PC-3 (cell line): ENCODE measurements at regions of chr12 and their contacts with region 1.

Region 1: GRCh38 chr12:47837190-47838171 is 17.8 kb upstream of the HDAC7 start:
- DNase-seq: peak; percentile 89
- ATAC-seq: peak; percentile 47
- H3K4me3 ChIP-seq: no peak overlapping the region
- H3K27ac ChIP-seq: no peak overlapping the region
- H3K4me1 ChIP-seq: peaks cover 25% of the 10 kb centered on the region
- H3K27me3 ChIP-seq: no peaks in the 10 kb centered on the region
- CTCF ChIP-seq: peak; percentile 93

Region 2: DNA sequence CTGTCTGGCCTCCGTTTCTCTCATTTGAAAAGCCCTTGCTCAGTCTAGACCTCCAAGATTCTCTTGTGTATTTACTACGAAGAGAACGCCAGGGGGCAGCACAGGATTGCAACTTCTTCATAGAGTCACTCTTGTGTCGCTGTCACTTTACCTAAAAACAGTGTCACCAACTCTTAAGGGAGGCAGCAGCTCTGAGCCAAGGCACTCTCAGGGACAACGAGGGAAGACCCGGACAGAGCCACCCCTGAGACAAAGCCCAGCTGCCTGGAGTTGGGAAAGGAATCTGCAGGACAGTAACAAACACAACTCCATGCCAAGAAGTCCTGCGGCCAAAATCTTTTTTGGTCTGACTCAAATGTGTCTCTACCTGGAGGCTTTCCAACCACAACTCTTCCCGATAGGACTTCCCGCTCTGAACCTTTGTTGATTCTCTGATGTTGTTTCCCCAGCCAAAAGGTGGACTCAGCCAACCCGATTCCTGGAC is 122.0 kb before region 1 on chr12:
- CTCF ChIA-PET with region 1: interaction called, 3 read pairs
- POLR2A ChIA-PET with region 1: no interaction called
- intact Hi-C with region 1: loop called (anchors 1 kb)
- DNase-seq: peak; percentile 91
- ATAC-seq: peak; percentile 74
- H3K4me3 ChIP-seq: peak overlapping the region; percentile 50
- H3K27ac ChIP-seq: no peak overlapping the region
- H3K4me1 ChIP-seq: peaks cover 13% of the 10 kb centered on the region; the same call in 1 of the 2 replicates
- H3K27me3 ChIP-seq: no peaks in the 10 kb centered on the region
- CTCF ChIP-seq: peak; percentile 96

Region 3: GRCh38 chr12:47742253-47742825 is 95.1 kb before region 1 on chr12:
- CTCF ChIA-PET with region 1: interaction called, 16 read pairs
- POLR2A ChIA-PET with region 1: no interaction called
- intact Hi-C with region 1: loop called (anchors 2 kb)
- DNase-seq: peak; percentile 76
- ATAC-seq: peak; percentile 46
- H3K4me3 ChIP-seq: no peak overlapping the region
- H3K27ac ChIP-seq: no peak overlapping the region
- H3K4me1 ChIP-seq: peaks cover 13% of the 10 kb centered on the region; the same call in 1 of the 2 replicates
- H3K27me3 ChIP-seq: no peaks in the 10 kb centered on the region
- CTCF ChIP-seq: peak; percentile 94

Region 4: GRCh38 chr12:47779301-47779942 is 58.1 kb before region 1 on chr12:
- CTCF ChIA-PET with region 1: interaction called, 5 read pairs
- POLR2A ChIA-PET with region 1: no interaction called
- intact Hi-C with region 1: loop called (anchors 1 kb)
- DNase-seq: peak; percentile 94
- ATAC-seq: peak; percentile 81
- H3K4me3 ChIP-seq: no peak overlapping the region
- H3K27ac ChIP-seq: no peak overlapping the region
- H3K4me1 ChIP-seq: peaks cover 23% of the 10 kb centered on the region
- H3K27me3 ChIP-seq: no peaks in the 10 kb centered on the region
- CTCF ChIP-seq: peak; percentile 96

Region 5: GRCh38 chr12:47797441-47797840 is 40.0 kb before region 1 on chr12:
- CTCF ChIA-PET with region 1: interaction called, 15 read pairs
- POLR2A ChIA-PET with region 1: no interaction called
- intact Hi-C with region 1: loop called (anchors 1 kb)
- DNase-seq: peak; percentile 20
- ATAC-seq: peak; percentile 65
- H3K4me3 ChIP-seq: no peak overlapping the region
- H3K27ac ChIP-seq: no peak overlapping the region
- H3K4me1 ChIP-seq: no peaks in the 10 kb centered on the region
- H3K27me3 ChIP-seq: no peaks in the 10 kb centered on the region
- CTCF ChIP-seq: peak; percentile 56

Region 6: DNA sequence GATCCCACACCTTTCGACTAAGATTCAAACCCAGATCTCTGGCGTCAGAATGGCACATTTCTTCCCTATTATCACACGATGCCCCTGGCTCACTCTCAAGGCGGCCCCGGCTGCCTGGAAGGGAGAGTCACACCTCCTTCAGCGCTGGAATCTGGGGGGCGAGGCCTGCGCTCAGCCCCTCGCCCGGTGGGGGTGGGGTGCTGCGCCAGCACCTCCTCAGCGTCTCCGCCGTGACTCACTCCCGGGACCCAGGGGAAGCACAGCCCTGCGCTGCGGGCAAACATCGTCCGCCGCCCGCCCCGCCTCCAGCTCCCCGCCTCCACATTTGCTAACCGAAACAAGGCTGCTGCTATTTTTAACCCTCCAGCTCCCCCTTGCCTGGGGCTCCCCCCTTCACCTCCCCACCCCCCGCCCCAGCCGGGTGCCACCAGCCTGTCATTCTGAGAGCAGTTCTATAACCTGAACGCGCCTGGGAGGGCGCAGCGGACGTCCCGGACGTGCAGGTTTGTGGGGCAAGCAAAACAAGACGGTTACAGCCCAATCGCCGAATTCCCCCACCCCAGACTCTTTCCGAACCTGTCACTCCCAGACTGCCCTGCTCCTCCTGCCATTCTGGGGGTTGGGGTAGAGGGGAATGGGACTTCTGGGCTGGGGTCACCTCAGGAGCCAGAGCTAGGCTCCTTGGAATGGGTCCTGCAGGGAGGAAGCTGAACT is 24.5 kb before region 1 on chr12:
- CTCF ChIA-PET with region 1: interaction called, 14 read pairs
- POLR2A ChIA-PET with region 1: no interaction called
- intact Hi-C with region 1: no loop called
- DNase-seq: peak; percentile 72
- ATAC-seq: peak; percentile 81
- H3K4me3 ChIP-seq: peak overlapping the region; percentile 65
- H3K27ac ChIP-seq: peak overlapping the region; percentile 72
- H3K4me1 ChIP-seq: peaks cover 49% of the 10 kb centered on the region
- H3K27me3 ChIP-seq: no peaks in the 10 kb centered on the region
- CTCF ChIP-seq: no peak

Region 7: DNA sequence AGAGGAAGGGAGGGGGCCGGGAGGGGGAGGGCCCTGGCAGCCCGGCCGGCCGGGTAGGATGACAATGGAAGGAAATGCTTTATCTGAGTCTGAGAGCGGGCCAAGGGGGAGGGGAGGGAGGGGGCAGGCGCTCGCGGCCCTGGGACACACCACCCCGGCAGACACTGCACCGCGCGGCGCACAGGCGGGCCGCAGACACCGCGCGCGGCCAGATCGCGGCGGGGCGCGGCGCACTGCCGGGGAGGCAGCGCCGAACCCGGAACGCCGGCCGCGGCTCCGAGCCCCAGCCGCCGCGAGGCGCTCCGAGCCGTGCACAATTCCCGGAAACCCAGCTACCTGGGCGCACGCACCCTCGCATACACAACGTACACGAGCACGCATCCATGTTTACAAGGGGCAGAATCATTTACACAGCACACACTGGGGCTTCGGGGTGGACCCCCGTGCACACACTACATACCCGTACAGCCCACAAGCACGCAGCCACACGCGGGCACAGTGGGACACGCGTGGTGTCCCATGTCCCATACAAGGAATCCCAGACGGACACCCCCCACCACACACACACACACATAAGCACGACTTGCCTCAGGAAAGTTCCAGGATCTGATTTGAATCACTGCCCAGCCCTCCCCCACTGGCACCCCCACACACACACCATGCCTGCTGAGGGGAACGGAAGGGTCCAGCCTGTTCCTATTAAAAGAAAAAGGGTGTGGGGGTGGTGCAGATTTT is 17.4 kb before region 1 on chr12 and contains the start of gene HDAC7:
- CTCF ChIA-PET with region 1: interaction called, 14 read pairs
- POLR2A ChIA-PET with region 1: interaction called, 15 read pairs
- intact Hi-C with region 1: loop called (anchors 1 kb)
- DNase-seq: peak; percentile 81
- ATAC-seq: peak; percentile 66
- H3K4me3 ChIP-seq: peak within 1 kb of the TSS; percentile 86
- H3K27ac ChIP-seq: peak within 1 kb of the TSS; percentile 92
- H3K4me1 ChIP-seq: peaks cover 72% of the 10 kb centered on the region
- H3K27me3 ChIP-seq: no peaks in the 10 kb centered on the region
- CTCF ChIP-seq: no peak
- total RNA-seq, gene HDAC7: 44.2 and 59.6 TPM in 2 replicates

Region 8: GRCh38 chr12:47863467-47863866 is 26.0 kb after region 1 on chr12:
- CTCF ChIA-PET with region 1: no interaction called
- POLR2A ChIA-PET with region 1: no interaction called
- intact Hi-C with region 1: no loop called
- DNase-seq: no peak
- ATAC-seq: no peak
- H3K4me3 ChIP-seq: no peak overlapping the region
- H3K27ac ChIP-seq: no peak overlapping the region
- H3K4me1 ChIP-seq: peaks cover 5% of the 10 kb centered on the region
- H3K27me3 ChIP-seq: no peaks in the 10 kb centered on the region
- CTCF ChIP-seq: no peak